Activated T-helper 1 cell treated with anti-CD3 and anti-CD28 coated beads, Interleukin-12 subunit alpha, Interleukin-12 subunit beta, Interleukin-2, Interleukin-4 antibody, amounts not matched to agents 30 ng/mL and 10 ng/mL and 1 ng/mL, durations not matched to agents 14 hours and 24 hours and 36 hours (primary cell): ENCODE measurements at regions of chr2 and their contacts with region 1.

Region 1: DNA sequence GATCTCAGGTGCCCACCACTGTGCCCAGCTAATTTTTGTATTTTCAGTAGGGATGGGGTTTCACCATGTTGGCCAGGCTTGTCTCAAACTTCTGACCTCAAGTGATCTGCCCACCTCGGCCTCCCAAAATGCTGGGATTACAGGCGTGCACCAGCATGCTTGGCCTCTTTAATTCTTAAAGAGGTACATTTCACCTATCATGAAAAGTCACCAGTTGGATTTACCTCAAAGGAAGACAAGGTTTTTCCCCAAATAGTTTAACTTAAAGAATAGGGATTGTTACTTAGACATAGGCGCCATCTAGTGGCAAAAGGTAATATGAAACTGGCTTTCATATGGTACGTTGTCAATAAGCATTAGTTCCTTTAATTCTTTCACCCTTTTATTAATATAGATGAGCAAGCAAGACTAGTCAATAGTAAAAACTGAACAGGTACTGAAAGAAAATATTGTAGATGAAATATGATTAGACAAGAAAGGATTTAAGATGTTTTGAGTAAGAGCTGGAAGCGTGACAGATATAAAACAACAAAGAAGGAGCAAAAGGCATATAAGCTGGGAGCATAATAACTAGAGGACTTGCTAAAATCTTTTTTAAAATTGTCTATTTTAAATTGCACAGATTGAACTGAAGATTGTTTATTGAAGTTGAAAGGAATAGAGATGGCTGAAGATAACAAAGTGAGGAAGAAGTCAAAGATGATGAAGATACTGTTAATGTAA is 35.0 kb upstream of the PSMD14 start:
- DNase-seq: no peak
- H3K4me3 Mint-ChIP-seq: no peak overlapping the region
- H3K27ac Mint-ChIP-seq: no peak overlapping the region
- H3K4me1 Mint-ChIP-seq: peaks cover 5% of the 10 kb centered on the region
- H3K27me3 Mint-ChIP-seq: peaks cover 25% of the 10 kb centered on the region

Region 2: GRCh38 chr2:160994141-160995002 is 278.8 kb before region 1 on chr2:
- intact Hi-C with region 1: loop called (anchors 10 kb)
- DNase-seq: peak; percentile 57
- H3K4me3 Mint-ChIP-seq: no peak overlapping the region
- H3K27ac Mint-ChIP-seq: no peak overlapping the region
- H3K4me1 Mint-ChIP-seq: peaks cover 11% of the 10 kb centered on the region
- H3K27me3 Mint-ChIP-seq: peaks cover 2% of the 10 kb centered on the region

Region 3: GRCh38 chr2:161063157-161063954 is 209.8 kb before region 1 on chr2:
- intact Hi-C with region 1: loop called (anchors 5 kb)
- DNase-seq: peak; percentile 59
- H3K4me3 Mint-ChIP-seq: no peak overlapping the region
- H3K27ac Mint-ChIP-seq: no peak overlapping the region
- H3K4me1 Mint-ChIP-seq: peaks cover 30% of the 10 kb centered on the region
- H3K27me3 Mint-ChIP-seq: peaks cover 2% of the 10 kb centered on the region

Region 4: GRCh38 chr2:161160226-161161069 is 112.8 kb before region 1 on chr2 and contains the start of gene TANK:
- intact Hi-C with region 1: loop called (anchors 1 kb)
- DNase-seq: peak; percentile 88
- H3K4me3 Mint-ChIP-seq: peak within 1 kb of the TSS; percentile 97
- H3K27ac Mint-ChIP-seq: peak within 1 kb of the TSS; percentile 99
- H3K4me1 Mint-ChIP-seq: peaks cover 81% of the 10 kb centered on the region
- H3K27me3 Mint-ChIP-seq: no peaks in the 10 kb centered on the region
- total RNA-seq, gene TANK: 136 and 141 TPM in 2 replicates

Region 5: DNA sequence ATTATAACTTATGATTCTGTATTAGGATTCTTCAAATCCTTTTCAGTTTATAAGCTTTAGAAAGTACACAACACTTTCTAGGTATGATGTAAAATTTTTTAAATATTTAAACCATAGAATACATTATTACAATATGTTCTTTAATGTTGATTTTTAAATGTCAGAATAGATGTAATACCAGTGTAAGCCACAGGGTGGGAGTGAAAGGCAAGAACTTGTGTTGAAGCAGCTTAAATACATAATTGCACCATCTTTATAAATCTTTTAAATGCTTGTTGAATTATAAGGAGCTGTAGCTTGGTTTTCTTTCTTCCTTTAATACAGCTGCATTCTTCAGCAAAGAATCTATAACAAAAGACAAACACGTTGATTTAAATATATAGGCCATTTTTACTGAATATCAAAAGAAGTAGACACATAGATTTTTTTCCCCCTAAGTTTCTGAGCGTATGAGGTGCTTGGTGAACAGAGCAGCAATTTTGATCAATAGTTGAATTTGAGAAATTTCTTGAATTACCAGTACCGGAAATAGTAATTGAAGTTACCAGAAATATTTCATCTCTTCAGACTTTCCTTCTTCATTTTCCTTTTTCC is 50.0 kb before region 1 on chr2:
- intact Hi-C with region 1: loop called (anchors 1 kb)
- DNase-seq: no peak
- H3K4me3 Mint-ChIP-seq: no peak overlapping the region
- H3K27ac Mint-ChIP-seq: no peak overlapping the region
- H3K4me1 Mint-ChIP-seq: peaks cover 20% of the 10 kb centered on the region
- H3K27me3 Mint-ChIP-seq: no peaks in the 10 kb centered on the region

Region 6: GRCh38 chr2:161238560-161239325 is 34.5 kb before region 1 on chr2:
- intact Hi-C with region 1: loop called (anchors 5 kb)
- DNase-seq: peak; percentile 47
- H3K4me3 Mint-ChIP-seq: peak overlapping the region; percentile 83
- H3K27ac Mint-ChIP-seq: peak overlapping the region; percentile 73
- H3K4me1 Mint-ChIP-seq: peaks cover 58% of the 10 kb centered on the region
- H3K27me3 Mint-ChIP-seq: no peaks in the 10 kb centered on the region

Region 7: GRCh38 chr2:161250864-161251436 is 22.2 kb before region 1 on chr2:
- intact Hi-C with region 1: loop called (anchors 1 kb)
- DNase-seq: no peak
- H3K4me3 Mint-ChIP-seq: no peak overlapping the region
- H3K27ac Mint-ChIP-seq: no peak overlapping the region
- H3K4me1 Mint-ChIP-seq: peaks cover 26% of the 10 kb centered on the region
- H3K27me3 Mint-ChIP-seq: no peaks in the 10 kb centered on the region

Region 8: GRCh38 chr2:161344692-161345091 is 71.5 kb after region 1 on chr2:
- intact Hi-C with region 1: no loop called
- DNase-seq: no peak
- H3K4me3 Mint-ChIP-seq: no peak overlapping the region
- H3K27ac Mint-ChIP-seq: no peak overlapping the region
- H3K4me1 Mint-ChIP-seq: peaks cover 6% of the 10 kb centered on the region
- H3K27me3 Mint-ChIP-seq: no peaks in the 10 kb centered on the region

Region 9: DNA sequence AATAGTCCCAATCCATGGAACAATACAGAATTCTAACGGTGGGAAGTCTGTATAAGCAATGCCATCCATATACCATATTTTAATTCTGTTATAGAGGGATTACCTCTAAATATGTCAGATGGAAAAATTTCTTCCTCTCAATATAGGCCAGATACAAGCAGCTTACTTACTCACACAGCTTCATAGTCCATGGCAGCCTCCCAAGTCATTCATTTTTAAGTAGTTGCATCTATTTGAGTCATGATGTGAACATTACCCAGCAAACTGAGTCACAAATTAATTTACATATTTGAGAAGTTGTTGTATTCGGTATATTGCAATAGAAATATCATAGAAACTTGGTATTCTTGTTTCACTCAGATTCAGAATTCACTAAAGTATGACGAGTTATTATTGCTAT is 163.2 kb after region 1 on chr2:
- intact Hi-C with region 1: no loop called
- DNase-seq: no peak
- H3K4me3 Mint-ChIP-seq: no peak overlapping the region
- H3K27ac Mint-ChIP-seq: no peak overlapping the region
- H3K4me1 Mint-ChIP-seq: no peaks in the 10 kb centered on the region
- H3K27me3 Mint-ChIP-seq: peaks cover 60% of the 10 kb centered on the region